Left cardiac atrium (tissue), 4 donors: ENCODE measurements at regions of chrX and their contacts with region 1.

Region 1: DNA sequence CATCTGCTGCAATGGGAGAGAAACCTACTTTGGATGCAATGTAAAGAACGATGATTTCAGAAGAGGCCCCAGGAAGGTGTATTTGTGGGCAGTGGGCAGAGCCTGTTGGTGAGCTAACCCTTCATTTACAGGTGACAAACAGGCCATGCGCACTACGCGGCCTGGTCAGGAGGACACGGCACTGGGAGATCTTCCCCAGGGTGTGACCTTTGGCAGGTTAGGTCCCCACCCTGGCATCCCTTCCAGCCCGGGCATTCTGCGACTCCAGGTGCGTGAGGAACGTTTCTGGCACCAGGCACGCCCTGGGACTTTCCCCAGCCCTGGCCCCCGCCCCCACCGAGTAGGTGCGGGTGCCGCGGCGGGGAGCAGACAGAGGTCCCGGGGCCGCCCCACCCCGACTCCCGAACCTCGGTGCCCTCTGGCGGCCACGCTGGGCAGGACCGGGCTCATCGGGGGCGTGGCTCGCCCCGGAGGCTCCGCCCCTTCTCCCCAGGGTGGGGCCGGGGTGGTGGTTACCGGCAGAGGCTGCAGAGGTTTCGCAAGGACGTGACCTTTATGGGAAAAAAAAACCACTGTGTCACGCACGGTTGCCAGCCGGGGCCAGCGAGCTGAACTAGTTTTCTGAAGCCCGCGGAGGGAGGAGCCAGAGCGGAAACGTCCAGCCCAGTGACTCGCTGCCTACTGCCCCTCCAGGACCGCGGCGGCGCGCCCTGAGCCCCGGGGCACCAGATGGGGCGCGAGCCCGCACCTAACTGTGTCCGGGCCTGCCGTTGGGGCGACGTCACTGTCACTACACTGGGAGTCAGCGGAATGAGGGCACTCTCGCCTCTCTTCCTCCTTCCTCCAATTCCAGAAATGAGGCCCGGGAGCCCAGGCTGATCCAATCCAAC is 5.0 kb upstream of the NYX start:
- DNase-seq: peak; percentile 91
- ATAC-seq: peak; percentile 94 to 95

Region 2: GRCh38 chrX:41198406-41198805 is 243.8 kb before region 1 on chrX:
- intact Hi-C with region 1: no loop called
- DNase-seq: no peak
- ATAC-seq: no peak

Region 3: GRCh38 chrX:41275661-41276609 is 166.2 kb before region 1 on chrX:
- intact Hi-C with region 1: loop called in 1 of 2 experiments (anchors 5 kb)
- DNase-seq: peak; percentile 73
- ATAC-seq: peak; percentile 87 to 94

Region 4: DNA sequence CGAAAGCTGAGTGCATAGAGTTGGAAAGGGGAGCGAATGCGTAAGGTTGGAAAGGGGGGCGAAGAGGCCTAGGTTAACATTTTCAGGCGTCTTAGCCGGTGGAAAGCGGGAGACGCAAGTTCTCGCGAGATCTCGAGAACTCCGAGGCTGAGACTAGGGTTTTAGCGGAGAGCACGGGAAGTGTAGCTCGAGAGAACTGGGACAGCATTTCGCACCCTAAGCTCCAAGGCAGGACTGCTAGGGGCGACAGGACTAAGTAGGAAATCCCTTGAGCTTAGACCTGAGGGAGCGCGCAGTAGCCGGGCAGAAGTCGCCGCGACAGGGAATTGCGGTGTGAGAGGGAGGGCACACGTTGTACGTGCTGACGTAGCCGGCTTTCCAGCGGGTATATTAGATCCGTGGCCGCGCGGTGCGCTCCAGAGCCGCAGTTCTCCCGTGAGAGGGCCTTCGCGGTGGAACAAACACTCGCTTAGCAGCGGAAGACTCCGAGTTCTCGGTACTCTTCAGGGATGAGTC is 108.4 kb before region 1 on chrX and contains the start of gene DDX3X:
- intact Hi-C with region 1: loop called in 1 of 2 experiments (anchors 10 kb)
- DNase-seq: peak; percentile 93
- ATAC-seq: peak; percentile 87
- total RNA-seq, gene DDX3X: 137 to 301 TPM

Region 5: GRCh38 chrX:42143866-42144592 is 701.9 kb after region 1 on chrX:
- intact Hi-C with region 1: no loop called
- DNase-seq: no peak
- ATAC-seq: no peak